ENCODE measurements at regions of chr3 and their contacts with region 1.

Region 1: GRCh38 chr3:38907426-38907825 is 91.4 kb upstream of the SCN10A start:
- DNase-seq: no peak
- H3K4me3 ChIP-seq: no peak overlapping the region
- H3K27ac ChIP-seq: no peak overlapping the region
- H3K4me1 ChIP-seq: no peaks in the 10 kb centered on the region
- H3K27me3 ChIP-seq: no peaks in the 10 kb centered on the region
- CTCF ChIP-seq: no peak
- POLR2A ChIP-seq: no peak

Region 2: DNA sequence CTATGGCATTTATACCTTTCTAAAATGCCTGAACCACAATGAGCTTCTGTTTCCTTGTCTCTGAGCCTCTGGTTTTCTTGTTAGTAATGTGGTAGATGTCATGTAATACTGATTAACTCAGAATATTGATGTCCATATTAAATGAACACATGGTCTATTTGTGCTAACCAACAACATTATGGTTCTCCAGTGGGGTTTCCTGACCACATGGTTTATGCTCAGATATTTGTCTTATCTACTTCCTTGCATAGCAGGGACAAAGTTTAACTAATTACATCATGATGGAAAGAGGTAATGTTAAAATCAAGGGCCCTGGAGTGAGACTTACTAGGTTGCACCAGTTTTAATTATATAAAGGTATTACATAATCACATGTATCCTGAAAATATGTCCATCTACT is 28.8 kb before region 1 on chr3:
- intact Hi-C with region 1: loop called (anchors 1 kb)
- DNase-seq: no peak
- H3K4me3 ChIP-seq: no peak overlapping the region
- H3K27ac ChIP-seq: no peak overlapping the region
- H3K4me1 ChIP-seq: no peaks in the 10 kb centered on the region
- H3K27me3 ChIP-seq: no peaks in the 10 kb centered on the region
- CTCF ChIP-seq: no peak
- POLR2A ChIP-seq: no peak